ENCODE measurements at regions of chr16 and their contacts with region 1.

Region 1: GRCh38 chr16:57639172-57639887 is 10.9 kb downstream of the ADGRG1 start:
- DNase-seq: no peak
- ATAC-seq: no peak

Region 2: DNA sequence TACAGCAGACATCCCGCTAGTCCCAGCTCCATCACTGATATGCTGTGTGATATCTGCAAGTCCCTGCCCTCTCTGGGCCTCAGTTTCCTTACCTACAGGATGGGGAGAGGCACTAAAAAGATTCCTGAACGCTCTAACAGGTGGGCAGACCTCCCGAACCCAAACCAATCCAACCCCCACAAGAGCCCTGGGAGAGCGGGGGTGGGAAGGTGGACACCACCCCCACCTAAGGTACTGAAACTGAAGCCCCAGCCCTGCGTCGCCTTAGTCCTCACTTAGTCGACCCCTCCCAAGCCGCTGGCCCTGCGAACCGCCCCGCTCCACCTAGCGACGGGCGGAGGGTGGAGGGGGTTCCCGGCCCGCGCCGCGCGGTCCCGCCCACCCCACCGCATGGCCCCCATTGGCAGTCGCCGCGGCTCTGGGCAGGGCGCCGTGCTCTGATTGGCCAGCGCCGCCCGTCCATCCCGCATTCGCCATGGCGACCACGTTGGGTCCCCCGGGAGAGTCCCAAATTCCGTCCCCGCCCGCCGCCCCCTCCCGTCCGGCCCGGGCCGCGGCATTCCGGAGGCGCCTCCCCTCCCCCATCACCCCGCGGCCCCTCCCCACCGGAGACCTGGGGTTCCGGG is 103.5 kb before region 1 on chr16:
- intact Hi-C with region 1: no loop called
- DNase-seq: peak; percentile 97
- ATAC-seq: peak; percentile 96

Region 3: DNA sequence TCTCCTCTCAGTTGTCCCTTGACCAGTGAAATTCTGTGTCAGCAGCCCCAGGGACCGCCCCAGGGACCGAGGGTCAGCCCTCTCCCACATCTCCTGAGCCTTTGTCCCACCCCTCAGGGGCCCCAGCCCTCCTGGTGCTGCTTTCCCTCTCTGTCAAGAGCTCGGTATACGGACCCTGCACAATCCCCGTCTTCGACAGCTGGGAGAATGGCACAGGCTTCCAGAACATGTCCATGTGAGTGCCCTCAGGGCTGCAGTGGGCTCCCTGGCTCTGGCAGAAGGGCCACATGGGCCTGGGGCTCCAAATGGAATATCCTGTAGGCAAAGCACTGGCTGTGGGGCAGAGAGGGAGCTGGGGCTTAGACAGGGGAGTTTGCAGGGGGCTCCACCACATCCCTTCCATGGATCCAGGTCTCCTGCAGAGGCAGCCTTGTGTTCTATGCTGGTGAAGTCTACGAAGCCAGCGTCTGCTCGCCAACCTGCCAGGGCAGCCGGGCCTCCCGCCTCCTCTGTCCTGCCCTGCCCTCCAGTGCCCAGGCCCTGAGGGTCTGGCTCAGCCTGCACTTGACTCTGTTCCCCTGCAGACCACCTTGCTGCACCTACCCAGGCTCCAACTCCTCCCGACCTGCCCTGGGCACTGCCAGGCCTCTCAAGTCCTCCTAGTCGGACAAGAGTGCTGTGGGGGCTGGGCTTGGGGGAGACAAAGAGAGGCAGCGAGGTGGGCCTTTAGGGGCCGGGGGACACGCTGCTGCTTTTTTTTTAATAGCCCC is 68.8 kb before region 1 on chr16:
- intact Hi-C with region 1: loop called (anchors 2 kb)
- DNase-seq: no peak
- ATAC-seq: no peak

Region 4: GRCh38 chr16:57892041-57892440 is 252.7 kb after region 1 on chr16:
- intact Hi-C with region 1: no loop called
- DNase-seq: no peak
- ATAC-seq: no peak

Measured in sciatic nerve (tissue), 2 donors.